ENCODE measurements at regions of chr10 and their contacts with region 1.

Region 1: DNA sequence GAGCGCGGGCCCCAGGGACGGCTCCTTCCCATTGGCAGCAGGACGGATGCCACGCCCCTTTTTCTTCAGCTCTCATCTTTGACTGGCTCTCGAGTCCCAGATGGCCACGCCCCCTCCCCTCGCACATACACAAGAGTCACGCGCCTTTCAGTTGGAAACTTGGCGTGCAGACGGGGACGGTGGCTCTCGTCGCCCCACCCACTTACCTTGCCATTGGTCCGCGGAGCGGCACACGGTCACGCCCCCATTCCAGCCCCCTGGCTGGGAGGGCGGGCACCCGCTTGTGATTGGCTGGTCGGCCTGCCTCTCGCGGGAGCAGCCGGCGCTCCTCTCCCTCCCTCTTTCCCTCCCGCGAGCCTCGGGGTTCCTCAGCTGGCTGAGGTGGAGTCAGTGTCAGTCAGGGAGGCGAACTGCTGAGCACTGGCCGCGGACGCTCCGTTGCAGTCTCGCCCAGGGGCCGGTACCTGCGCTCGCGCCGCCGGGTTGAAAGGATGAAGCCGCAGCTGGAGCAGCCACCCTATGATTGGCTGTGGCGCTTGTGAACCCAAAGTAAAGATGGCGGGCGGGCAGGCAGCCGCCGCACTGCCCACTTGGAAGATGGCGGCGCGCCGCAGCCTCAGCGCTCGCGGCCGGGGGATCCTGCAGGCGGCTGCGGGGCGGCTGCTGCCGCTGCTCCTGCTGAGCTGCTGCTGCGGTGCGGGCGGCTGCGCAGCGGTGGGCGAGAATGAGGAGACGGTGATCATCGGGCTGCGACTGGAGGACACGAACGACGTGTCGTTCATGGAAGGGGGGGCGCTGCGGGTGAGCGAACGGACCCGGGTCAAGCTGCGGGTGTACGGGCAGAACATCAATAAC is at the start of gene CNNM2:
- DNase-seq: peak; percentile 95 to 96
- H3K4me3 ChIP-seq: peak within 1 kb of the TSS; percentile 96
- H3K27ac ChIP-seq: 0 out of 2 replicates have a peak within 1 kb of the TSS, but pooled peaks have one; percentile 41
- H3K4me1 ChIP-seq: peaks cover 36% of the 10 kb centered on the region
- H3K27me3 ChIP-seq: no peaks in the 10 kb centered on the region
- CTCF ChIP-seq: no peak
- total RNA-seq, gene CNNM2: 7.4 and 8.8 TPM in 2 replicates

Region 2: DNA sequence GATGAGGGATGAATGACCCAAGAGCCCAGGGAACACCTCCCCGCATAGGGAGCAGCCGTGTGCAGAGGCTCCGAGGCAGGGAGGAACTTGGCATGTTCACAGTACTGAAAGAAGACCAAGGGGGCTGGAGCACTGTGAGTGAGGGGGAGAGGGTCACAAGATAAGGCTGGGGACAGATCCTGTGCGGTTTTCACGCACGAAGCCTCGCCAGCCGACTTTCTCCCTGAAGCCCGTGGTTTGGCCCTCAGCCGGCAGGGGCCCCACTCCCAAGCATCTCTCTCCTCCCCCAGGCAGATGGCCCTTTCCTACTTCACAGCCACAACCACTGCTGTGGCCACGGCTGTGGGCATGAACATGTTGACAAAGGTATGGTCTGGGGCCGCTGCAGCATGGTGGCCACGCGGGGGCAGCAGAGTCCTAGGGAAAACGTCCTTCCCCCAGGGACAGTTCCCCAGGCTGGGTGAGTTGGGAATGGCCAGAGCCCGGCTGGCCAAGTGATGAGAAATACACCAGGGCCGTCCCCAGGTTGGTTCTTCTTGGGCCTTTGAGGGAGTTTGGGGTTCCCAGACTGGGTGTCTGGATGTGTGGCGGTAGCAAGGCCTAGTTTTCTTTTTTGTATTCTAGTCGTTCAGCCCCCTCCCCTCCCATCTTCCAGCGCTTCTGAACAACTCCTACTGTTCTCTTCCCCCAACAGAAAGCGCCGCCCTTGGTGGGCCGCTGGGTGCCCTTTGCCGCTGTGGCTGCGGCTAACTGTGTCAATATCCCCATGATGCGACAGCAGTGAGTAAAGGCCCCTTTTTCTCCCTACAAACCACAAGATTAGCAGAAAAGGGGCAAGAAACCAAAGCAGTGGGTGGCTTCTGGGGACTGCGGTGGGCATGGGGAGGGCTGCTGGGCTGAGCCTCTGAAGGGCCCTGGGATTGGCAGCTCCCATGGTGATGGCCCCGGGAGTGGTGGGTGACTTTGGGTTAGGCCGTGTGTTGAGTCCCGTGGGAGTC is 188.9 kb before region 1 on chr10:
- CTCF ChIA-PET with region 1: no interaction called
- POLR2A ChIA-PET with region 1: no interaction called
- intact Hi-C with region 1: loop called (anchors 1 kb)
- DNase-seq: peak in 1 of 2 experiments; percentile 71
- H3K4me3 ChIP-seq: no peak overlapping the region
- H3K27ac ChIP-seq: no peak overlapping the region
- H3K4me1 ChIP-seq: no peaks in the 10 kb centered on the region
- H3K27me3 ChIP-seq: no peaks in the 10 kb centered on the region
- CTCF ChIP-seq: peak; percentile 74

Region 3: GRCh38 chr10:102752934-102753664 is 165.1 kb before region 1 on chr10:
- CTCF ChIA-PET with region 1: no interaction called
- POLR2A ChIA-PET with region 1: no interaction called
- intact Hi-C with region 1: no loop called
- DNase-seq: no peak
- H3K4me3 ChIP-seq: no peak overlapping the region
- H3K27ac ChIP-seq: no peak overlapping the region
- H3K4me1 ChIP-seq: no peaks in the 10 kb centered on the region
- H3K27me3 ChIP-seq: no peaks in the 10 kb centered on the region
- CTCF ChIP-seq: peak; percentile 53; the same call in 1 of the 2 replicates

Region 4: GRCh38 chr10:103021897-103022286 is 103.7 kb after region 1 on chr10:
- CTCF ChIA-PET with region 1: interaction called, 18 read pairs
- POLR2A ChIA-PET with region 1: no interaction called
- intact Hi-C with region 1: no loop called
- DNase-seq: no peak
- H3K4me3 ChIP-seq: no peak overlapping the region
- H3K27ac ChIP-seq: no peak overlapping the region
- H3K4me1 ChIP-seq: no peaks in the 10 kb centered on the region
- H3K27me3 ChIP-seq: no peaks in the 10 kb centered on the region
- CTCF ChIP-seq: no peak

Region 5: DNA sequence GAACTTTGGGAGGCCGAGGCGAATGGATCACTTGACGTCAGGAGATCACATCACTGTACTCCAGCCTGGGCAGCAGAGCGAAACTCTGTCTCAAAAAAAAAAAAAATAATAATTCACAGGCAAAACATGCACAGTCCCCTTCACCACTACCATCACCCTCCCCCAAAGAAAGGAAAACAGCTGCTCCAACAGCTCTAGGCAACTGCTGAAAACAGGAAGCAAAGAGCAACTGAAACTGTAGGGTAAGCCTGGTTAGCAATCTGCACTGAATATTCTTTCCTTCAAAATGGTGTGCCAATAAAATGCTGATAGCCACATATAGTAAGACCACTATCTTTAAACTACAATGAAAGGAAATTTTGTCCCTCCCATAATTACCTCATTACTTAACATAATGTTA is 263.1 kb after region 1 on chr10:
- CTCF ChIA-PET with region 1: no interaction called
- POLR2A ChIA-PET with region 1: interaction called, 21 read pairs
- intact Hi-C with region 1: no loop called
- DNase-seq: no peak
- H3K4me3 ChIP-seq: no peak overlapping the region
- H3K27ac ChIP-seq: no peak overlapping the region
- H3K4me1 ChIP-seq: peaks cover 24% of the 10 kb centered on the region
- H3K27me3 ChIP-seq: no peaks in the 10 kb centered on the region
- CTCF ChIP-seq: no peak

Region 6: GRCh38 chr10:103244663-103245271 is 326.6 kb after region 1 on chr10:
- CTCF ChIA-PET with region 1: interaction called, 6 read pairs
- POLR2A ChIA-PET with region 1: no interaction called
- intact Hi-C with region 1: loop called (anchors 2 kb)
- DNase-seq: peak; percentile 49 to 58
- H3K4me3 ChIP-seq: no peak overlapping the region
- H3K27ac ChIP-seq: no peak overlapping the region
- H3K4me1 ChIP-seq: peaks cover 40% of the 10 kb centered on the region
- H3K27me3 ChIP-seq: no peaks in the 10 kb centered on the region
- CTCF ChIP-seq: peak; percentile 83

Region 7: DNA sequence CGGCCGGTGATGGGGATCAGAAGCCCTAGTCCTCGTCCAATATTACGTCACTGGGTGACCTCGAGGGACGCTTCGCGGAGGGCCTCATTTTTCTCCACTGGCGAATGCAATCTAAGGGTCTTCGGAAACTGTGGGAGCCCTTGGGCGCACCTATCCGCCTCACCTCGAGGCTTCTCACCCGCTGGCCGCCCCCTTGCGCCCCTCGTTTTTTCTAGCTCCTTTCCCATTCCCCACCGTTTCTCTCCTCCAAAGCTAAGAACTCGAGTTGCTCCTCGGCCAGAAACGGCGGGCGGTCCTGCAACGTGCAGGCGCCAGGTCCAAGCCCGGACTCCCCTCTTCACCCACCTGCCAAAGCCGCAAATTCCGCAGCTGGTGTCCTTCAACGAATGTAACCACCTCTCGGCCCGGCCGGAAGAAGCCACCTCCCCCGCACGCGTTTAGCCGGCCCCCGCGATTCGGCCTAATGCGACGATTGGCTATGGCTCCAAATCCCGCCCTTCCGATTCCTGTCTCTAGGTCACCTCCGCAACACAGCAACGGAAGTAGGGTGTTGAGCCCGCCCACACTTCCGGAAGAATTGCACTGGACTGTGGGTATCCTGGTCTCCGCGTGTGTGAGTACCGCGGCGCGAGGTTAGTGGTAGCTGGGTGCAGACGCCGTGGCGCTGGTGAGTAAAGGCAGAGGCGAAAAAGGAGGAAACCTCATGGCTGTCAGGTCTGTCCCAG is 478.0 kb after region 1 on chr10 and contains the starts of genes ATP5MK and PDCD11:
- CTCF ChIA-PET with region 1: no interaction called
- POLR2A ChIA-PET with region 1: no interaction called
- intact Hi-C with region 1: loop called (anchors 5 kb)
- DNase-seq: peak; percentile 89 to 95
- H3K4me3 ChIP-seq: peak within 1 kb of the TSS; percentile 77
- H3K27ac ChIP-seq: peak within 1 kb of the TSS; percentile 45
- H3K4me1 ChIP-seq: peaks cover 30% of the 10 kb centered on the region
- H3K27me3 ChIP-seq: no peaks in the 10 kb centered on the region
- CTCF ChIP-seq: no peak
- total RNA-seq, gene ATP5MK: 198 and 230 TPM in 2 replicates
- total RNA-seq, gene PDCD11: 20.4 and 20.5 TPM in 2 replicates